Transverse colon (tissue), 4 donors: ENCODE measurements at regions of chr6 and their contacts with region 1.

Region 1: GRCh38 chr6:80605165-80605989 is 498.9 kb downstream of the BCKDHB start:
- DNase-seq: no peak
- H3K4me3 ChIP-seq: no peak overlapping the region
- H3K27ac ChIP-seq: no peak overlapping the region
- H3K4me1 ChIP-seq: peaks cover 0 to 4% (median 0%) of the 10 kb centered on the region in 4 donors
- H3K27me3 ChIP-seq: no peaks in the 10 kb centered on the region
- CTCF ChIP-seq: peak; percentile 38 to 56 (median 49)
- EP300 ChIP-seq: no peak
- POLR2A ChIP-seq: no peak

Region 2: DNA sequence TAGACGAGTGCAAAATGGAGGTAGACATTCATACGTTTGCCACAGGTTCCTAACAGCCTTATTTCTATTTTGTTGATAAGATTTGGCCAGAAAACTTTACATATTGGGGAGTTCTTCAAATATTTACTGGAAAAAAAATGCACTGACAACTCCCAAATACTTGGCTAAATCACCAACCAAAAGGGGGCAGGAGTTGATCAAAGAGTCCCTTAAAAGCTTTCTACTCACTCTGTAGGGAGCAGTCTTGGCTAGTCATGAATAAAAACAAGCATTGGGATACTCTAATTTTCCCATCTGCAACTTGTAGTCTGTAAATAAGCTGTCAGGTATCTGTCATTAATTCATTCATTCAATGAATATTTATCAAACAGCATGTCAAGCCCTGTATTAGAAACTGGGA is 1128.7 kb after region 1 on chr6:
- in situ Hi-C with region 1: loop called in 1 of 4 experiments (anchors 25 kb)
- intact Hi-C with region 1: no loop called
- DNase-seq: no peak
- H3K4me3 ChIP-seq: no peak overlapping the region
- H3K27ac ChIP-seq: no peak overlapping the region
- H3K4me1 ChIP-seq: no peaks in the 10 kb centered on the region
- H3K27me3 ChIP-seq: no peaks in the 10 kb centered on the region
- CTCF ChIP-seq: no peak
- EP300 ChIP-seq: no peak
- POLR2A ChIP-seq: no peak

Region 3: GRCh38 chr6:82040405-82041221 is 1435.2 kb after region 1 on chr6:
- in situ Hi-C with region 1: loop called in 1 of 4 experiments (anchors 25 kb)
- intact Hi-C with region 1: no loop called
- DNase-seq: no peak
- H3K4me3 ChIP-seq: no peak overlapping the region
- H3K27ac ChIP-seq: no peak overlapping the region
- H3K4me1 ChIP-seq: no peaks in the 10 kb centered on the region
- H3K27me3 ChIP-seq: no peaks in the 10 kb centered on the region
- CTCF ChIP-seq: peak; percentile 52 to 63 (median 55)
- EP300 ChIP-seq: no peak
- POLR2A ChIP-seq: no peak